ENCODE measurements at regions of chr12 and their contacts with region 1.

Region 1: GRCh38 chr12:120495723-120496412 is at the start of gene DYNLL1:
- DNase-seq: peak; percentile 95 to 97
- H3K4me3 ChIP-seq: peak within 1 kb of the TSS; percentile 82 to 98
- H3K27ac ChIP-seq: peak within 1 kb of the TSS; percentile 92 to 95
- H3K4me1 ChIP-seq: peaks cover 0 to 29% (median 19%) of the 10 kb centered on the region in 4 donors
- H3K27me3 ChIP-seq: no peaks in the 10 kb centered on the region
- CTCF ChIP-seq: peak in 1 of 2 experiments; percentile 25

Region 2: DNA sequence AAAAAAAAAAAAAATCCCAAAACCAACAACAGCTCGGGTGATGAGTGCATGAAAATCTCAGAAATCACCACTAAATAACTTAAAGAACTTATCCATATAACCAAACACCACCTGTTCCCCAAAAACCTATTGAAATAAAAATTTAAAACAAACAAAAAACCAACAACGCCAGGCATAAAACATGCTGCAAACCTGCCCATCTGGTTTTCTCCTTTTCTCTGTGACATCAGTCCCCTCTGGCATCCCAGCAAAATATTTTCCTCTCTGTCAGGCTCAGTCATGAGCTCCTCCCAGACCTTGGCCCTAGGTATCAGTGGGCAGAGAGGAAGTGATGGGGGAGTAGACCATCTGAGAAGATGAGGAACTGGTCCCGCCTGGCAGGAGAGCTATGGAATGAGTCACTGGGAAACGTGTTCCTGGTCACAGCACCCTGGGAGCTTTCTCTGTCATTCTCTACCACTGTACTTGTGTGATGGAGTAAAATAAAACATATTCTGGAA is 21.4 kb before region 1 on chr12:
- intact Hi-C with region 1: no loop called
- DNase-seq: no peak
- H3K4me3 ChIP-seq: no peak overlapping the region
- H3K27ac ChIP-seq: no peak overlapping the region
- H3K4me1 ChIP-seq: peaks cover 0 to 21% (median 8%) of the 10 kb centered on the region in 4 donors
- H3K27me3 ChIP-seq: no peaks in the 10 kb centered on the region
- CTCF ChIP-seq: no peak

Region 3: GRCh38 chr12:120534703-120535655 is 39.1 kb after region 1 on chr12:
- intact Hi-C with region 1: loop called (anchors 5 kb)
- DNase-seq: peak; percentile 28 to 73
- H3K4me3 ChIP-seq: peak overlapping the region; percentile 86 to 98
- H3K27ac ChIP-seq: peak overlapping the region; percentile 90 to 96
- H3K4me1 ChIP-seq: peaks cover 9 to 55% (median 45%) of the 10 kb centered on the region in 4 donors
- H3K27me3 ChIP-seq: no peaks in the 10 kb centered on the region
- CTCF ChIP-seq: no peak

Region 4: GRCh38 chr12:120554678-120555077 is 58.8 kb after region 1 on chr12:
- intact Hi-C with region 1: no loop called
- DNase-seq: no peak
- H3K4me3 ChIP-seq: no peak overlapping the region
- H3K27ac ChIP-seq: peak overlapping the region in 1 of 2 donors; percentile 9
- H3K4me1 ChIP-seq: peaks cover 0 to 44% (median 19%) of the 10 kb centered on the region in 4 donors
- H3K27me3 ChIP-seq: no peaks in the 10 kb centered on the region
- CTCF ChIP-seq: no peak

Measured in tibial artery (tissue), 4 donors.